ENCODE measurements at regions of chr2 and their contacts with region 1.

Region 1: DNA sequence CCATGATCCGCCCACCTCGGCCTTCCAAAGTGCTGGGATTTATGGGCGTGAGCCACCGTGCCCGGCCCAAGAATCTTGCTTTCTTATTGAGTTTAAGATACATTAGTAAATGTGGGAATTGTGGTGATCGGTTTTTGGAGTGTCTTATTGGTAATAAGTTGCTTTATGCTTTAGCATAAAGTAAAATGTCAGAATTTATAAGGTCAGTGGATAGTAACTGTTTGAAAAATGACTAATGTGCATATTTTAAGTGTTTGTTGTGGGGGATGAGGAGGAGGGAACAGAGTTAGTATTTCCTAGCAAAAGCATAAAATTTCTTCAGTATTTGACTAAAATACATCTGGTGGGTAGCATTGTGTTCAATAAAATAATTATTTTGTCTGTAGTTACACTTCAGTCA is 77.4 kb downstream of the SLC39A10 start:
- DNase-seq: no peak
- H3K4me3 Mint-ChIP-seq: no peak overlapping the region
- H3K27ac Mint-ChIP-seq: no peak overlapping the region
- H3K4me1 Mint-ChIP-seq: no peaks in the 10 kb centered on the region
- H3K27me3 Mint-ChIP-seq: no peaks in the 10 kb centered on the region
- CTCF ChIP-seq: no peak

Region 2: DNA sequence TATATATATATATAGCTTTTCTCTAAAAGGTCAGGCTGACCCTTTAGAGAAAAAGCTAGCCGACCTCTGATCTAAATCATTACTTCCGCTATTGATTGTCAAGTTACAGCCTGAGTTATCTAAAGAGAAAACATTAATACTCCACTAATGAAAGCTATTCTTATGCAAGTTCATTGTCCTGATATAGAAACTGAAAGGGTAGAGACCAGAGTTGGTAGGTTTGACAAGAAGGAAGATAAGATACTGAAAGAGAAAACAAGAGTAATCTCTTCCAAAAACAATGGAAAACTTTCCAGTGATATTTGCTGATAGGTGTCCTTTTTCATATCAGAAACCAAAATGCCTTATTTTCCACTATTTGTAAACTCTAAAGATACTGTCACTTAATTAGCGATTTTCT is 140.1 kb before region 1 on chr2:
- CTCF ChIA-PET with region 1: interaction called, 10 read pairs
- intact Hi-C with region 1: no loop called
- DNase-seq: no peak
- H3K4me3 Mint-ChIP-seq: no peak overlapping the region
- H3K27ac Mint-ChIP-seq: no peak overlapping the region
- H3K4me1 Mint-ChIP-seq: peaks cover 40% of the 10 kb centered on the region
- H3K27me3 Mint-ChIP-seq: no peaks in the 10 kb centered on the region
- CTCF ChIP-seq: no peak

Region 3: DNA sequence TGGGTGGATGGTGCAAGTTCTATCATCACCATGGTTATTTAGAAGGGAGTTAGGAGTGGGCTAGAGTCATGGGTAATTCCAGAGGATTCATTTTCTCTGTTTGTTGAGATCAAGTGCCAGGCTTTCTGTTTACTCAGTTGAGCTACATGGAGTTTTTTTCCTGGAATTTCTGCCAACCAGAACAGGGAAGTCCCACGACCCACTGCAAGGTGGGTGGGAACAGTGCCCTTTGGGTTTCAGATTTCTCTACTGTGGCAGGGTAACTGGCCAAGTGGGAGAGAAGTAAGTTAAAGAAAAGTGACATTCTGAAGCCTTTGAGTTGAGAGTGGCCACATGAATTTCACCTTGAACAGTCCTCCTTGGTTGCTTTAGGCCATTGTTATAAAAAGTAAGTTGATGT is 61.5 kb after region 1 on chr2:
- CTCF ChIA-PET with region 1: interaction called, 10 read pairs
- intact Hi-C with region 1: no loop called
- DNase-seq: no peak
- H3K4me3 Mint-ChIP-seq: no peak overlapping the region
- H3K27ac Mint-ChIP-seq: no peak overlapping the region
- H3K4me1 Mint-ChIP-seq: peaks cover 9% of the 10 kb centered on the region
- H3K27me3 Mint-ChIP-seq: no peaks in the 10 kb centered on the region
- CTCF ChIP-seq: no peak

Measured in Calu3 (cell line).